ENCODE measurements at regions of chr6 and their contacts with region 1.

Region 1: DNA sequence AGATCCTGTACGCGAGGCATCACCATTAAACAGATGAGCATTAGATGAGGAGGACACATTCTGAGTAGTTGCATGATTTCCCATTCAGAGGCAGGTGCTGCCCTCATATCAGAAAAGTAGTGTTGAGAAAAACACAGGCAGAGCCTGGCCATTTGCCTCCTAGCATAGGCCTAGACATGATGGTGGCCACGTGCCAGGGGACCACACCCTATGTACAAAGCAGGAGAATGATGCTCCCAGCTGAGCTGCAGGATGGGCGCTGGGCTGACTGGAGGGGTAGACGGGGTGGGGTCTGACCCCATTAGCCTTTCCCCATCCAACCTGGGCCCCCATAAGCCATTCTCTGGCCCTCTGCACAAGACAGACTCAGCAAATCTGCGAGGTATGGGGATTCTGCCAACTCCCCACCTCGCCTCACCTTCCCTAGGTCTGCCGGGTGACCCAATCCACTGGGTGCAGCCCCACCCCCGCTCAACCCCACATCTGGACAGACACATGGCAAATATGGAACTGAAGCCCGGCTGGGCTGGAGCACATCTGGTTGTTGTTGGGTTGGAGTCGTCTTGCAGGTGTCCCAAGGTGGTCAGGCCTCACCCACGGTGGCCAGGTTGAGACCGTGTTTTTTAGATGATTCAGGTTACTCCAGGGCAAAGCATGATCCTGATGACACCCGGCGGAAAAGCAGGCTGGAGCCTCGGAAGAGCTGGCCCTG is 13.9 kb downstream of the PI16 start:
- DNase-seq: no peak
- H3K4me3 ChIP-seq: no peak overlapping the region
- H3K27ac ChIP-seq: peak overlapping the region in 2 of 3 donors; percentile 7 to 70
- H3K4me1 ChIP-seq: peaks cover 62 to 67% of the 10 kb centered on the region in 2 donors
- H3K27me3 ChIP-seq: no peaks in the 10 kb centered on the region
- CTCF ChIP-seq: no peak
- POLR2A ChIP-seq: no peak

Region 2: DNA sequence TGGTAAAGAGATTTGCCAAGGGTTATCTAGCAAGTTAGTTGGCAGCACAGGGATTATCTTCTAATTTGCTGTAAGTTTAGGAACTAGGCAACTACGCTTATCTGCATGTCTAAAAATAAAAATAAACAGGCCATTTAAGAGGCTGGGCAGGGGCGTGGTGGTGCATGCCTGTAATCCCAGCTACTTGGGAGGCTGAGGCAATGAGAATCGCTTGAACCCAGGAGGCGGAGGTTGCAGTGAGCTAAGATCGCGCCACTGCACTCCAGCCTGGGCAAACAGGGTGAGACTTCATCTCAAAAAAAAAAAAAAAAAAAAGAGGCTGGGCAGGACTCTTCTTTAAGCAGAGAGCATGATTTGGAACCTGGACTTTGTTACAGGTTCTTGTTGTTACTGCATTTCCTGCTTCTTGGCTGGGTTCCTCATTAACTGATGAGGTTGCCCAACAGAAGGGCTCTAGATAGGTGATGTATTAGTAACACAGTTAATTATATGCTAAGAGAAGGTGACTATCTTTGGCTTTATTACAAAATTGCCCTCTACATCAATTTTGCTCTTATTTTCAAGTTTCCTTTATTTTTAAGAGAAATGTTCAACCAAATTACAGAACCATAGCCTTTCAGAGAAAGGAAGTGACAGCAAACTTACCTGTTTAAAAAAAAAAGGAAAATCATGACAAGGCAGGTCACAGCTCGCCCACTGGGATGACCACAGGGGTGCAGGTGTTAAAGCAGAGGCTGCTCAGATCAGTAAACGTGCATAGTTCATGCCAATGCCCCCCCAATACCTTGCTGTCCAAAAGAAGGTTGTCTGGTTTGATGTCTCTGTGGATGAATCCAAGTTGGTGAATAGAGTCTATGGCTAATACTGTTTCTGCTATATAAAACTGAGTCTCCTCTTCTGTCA is 453.6 kb before region 1 on chr6:
- intact Hi-C with region 1: no loop called
- DNase-seq: no peak
- H3K4me3 ChIP-seq: no peak overlapping the region
- H3K27ac ChIP-seq: no peak overlapping the region
- H3K4me1 ChIP-seq: no peaks in the 10 kb centered on the region
- H3K27me3 ChIP-seq: no peaks in the 10 kb centered on the region
- CTCF ChIP-seq: no peak
- POLR2A ChIP-seq: no peak

Region 3: GRCh38 chr6:36912586-36912985 is 55.8 kb before region 1 on chr6:
- intact Hi-C with region 1: loop called (anchors 5 kb)
- DNase-seq: no peak
- H3K4me3 ChIP-seq: no peak overlapping the region
- H3K27ac ChIP-seq: peak overlapping the region in 2 of 3 donors; percentile 71 to 95
- H3K4me1 ChIP-seq: peaks cover 48 to 52% of the 10 kb centered on the region in 2 donors
- H3K27me3 ChIP-seq: no peaks in the 10 kb centered on the region
- CTCF ChIP-seq: no peak
- POLR2A ChIP-seq: no peak

Measured in thyroid gland (tissue), 4 donors.